ENCODE measurements at regions of chr4 and their contacts with region 1.

Region 1: DNA sequence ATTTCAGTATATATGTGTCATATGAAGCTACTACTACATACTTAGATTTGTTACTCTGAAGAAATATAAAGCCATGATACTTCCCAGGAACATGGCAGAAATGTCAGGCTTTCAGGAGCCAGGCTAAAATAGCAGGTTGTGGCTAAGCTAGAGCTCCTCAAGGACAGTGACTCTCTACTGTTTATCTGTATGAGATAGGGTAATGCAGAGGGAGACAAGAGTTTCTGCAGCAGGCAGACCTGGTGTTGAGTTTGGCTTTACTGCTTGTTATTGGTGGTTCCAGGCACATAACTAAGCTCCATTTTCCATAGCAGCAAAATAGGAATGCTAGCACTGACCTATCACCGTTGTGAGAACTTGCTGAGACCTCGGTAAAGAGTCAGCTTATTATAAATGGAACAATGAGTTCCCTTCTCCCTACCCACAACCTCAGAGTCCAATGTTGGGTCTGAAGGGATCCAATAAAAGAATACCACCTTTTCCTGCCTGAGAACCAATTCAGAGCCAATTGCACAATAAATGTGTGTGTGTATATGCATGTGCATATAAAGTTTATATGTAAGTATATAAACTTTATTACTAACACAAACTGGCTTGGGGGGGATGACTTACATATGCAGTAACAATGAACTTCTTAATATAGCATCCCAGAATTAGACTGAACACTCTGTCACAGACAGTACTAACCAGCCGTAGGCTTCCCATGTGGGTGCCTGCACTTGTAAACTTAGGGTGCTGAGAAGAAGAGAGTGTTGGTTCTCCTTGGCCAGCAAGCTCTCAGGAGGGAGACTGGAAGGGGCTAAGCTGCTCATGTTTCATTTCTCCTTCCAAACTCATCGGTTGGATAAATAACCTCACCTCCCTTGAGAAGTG is 51.9 kb upstream of the PAQR3 start:
- DNase-seq: no peak
- H3K4me3 ChIP-seq: no peak overlapping the region
- CTCF ChIP-seq: no peak
- POLR2A ChIP-seq: no peak

Region 2: DNA sequence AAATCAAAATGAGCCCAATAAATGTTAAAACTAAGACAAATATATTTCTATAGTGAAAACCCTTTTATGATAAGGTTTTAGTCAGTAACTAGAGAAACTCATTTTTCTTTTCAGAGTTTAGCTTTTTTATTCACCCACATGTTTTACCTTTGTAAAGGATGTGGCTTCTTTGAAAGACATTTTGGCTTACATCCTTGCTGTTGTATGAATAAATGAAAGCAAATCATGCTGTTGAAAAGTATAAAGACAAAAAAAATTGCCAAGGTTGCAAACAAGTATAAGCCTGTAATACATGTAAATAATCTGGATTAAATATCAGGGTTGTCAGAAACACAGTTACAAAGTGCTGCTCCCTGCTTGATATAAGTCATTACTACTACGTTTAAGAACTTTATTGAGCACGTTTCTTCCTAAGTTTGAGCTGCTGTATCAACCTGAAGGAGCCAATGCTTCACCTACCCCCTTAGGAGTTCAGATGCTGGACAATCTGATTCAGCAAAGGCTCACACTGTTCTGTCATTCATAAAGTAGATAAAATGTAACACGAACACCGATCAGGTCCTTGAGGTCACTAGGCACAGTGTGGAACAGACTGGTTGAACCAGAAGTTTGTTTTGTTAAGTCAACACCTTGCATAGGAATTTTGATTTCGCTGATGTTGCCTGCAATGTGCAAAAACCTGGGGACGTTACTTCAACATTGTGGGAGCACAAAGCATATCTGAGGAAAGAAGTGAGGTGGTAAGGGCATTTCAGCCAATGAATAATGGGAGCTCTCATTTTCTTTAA is 1718.1 kb after region 1 on chr4:
- intact Hi-C with region 1: loop called (anchors 5 kb)
- DNase-seq: no peak
- H3K4me3 ChIP-seq: no peak overlapping the region
- CTCF ChIP-seq: no peak
- POLR2A ChIP-seq: no peak

Region 3: DNA sequence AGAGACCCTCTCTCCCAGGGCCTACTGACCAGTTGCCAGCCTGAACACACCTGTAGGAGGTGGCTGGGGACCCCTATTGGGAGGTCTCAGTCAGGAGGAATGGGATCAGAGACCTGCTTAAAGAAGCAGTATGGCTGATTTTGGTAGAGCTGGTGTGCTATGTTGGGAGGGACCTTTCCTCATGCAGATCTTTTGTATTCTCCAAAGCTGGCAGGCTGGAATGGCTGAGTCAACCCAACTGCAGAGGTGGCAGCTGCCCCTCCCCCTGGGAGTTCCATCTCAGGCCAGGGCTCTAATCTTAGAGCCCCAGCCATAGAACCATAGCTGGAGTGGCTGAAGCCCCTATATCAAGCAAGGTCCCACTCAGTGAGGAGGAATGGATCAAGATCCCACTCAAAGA is 1760.0 kb after region 1 on chr4:
- intact Hi-C with region 1: no loop called
- DNase-seq: no peak
- H3K4me3 ChIP-seq: no peak overlapping the region
- CTCF ChIP-seq: no peak
- POLR2A ChIP-seq: no peak